Breast epithelium (tissue), 4 donors: ENCODE measurements at regions of chr1 and their contacts with region 1.

Region 1: DNA sequence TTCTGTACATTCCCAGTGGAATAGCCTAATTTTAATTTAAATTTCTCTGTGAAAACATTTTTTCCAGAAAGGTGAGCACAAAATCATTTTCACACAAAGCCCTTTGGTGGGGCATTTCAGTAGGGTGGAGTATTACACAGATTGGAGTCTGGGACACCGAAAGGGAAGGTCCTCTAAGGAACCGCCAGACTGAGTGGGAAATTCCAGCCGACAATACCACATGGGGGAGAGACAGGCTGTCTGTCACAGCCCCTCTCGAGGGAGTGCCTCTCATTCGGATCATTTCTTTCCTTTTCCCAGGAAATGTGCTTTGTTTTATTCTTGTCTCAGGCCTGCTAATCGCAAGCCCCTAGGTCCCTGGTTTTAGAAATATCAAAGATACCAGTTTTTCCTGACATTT is 150.6 kb upstream of the HOOK1 start:
- DNase-seq: no peak
- H3K4me3 ChIP-seq: no peak overlapping the region
- H3K27ac ChIP-seq: no peak overlapping the region
- H3K4me1 ChIP-seq: no peaks in the 10 kb centered on the region
- H3K27me3 ChIP-seq: no peaks in the 10 kb centered on the region
- CTCF ChIP-seq: no peak
- POLR2A ChIP-seq: no peak

Region 2: DNA sequence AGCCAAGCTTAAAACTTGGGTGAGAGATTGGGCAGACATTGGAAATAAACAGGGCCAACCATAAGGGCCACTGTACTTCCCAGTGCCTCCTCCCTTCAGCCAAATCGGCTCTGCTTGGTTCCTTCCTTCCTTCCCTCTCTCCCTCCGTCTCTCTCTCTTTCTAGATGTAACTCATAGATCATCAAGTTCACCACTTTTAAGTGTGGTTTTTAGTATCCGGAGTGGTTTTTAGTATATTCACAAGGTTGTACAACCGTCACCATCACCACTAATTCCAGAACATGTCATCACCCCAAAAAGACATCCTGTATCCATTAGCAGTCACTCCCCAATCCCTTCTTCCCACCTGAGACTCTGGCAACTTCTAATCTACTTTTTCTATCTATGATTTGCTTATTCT is 1015.3 kb before region 1 on chr1:
- intact Hi-C with region 1: no loop called
- DNase-seq: no peak
- H3K4me3 ChIP-seq: no peak overlapping the region
- H3K27ac ChIP-seq: no peak overlapping the region
- H3K4me1 ChIP-seq: no peaks in the 10 kb centered on the region
- H3K27me3 ChIP-seq: no peaks in the 10 kb centered on the region
- CTCF ChIP-seq: no peak
- POLR2A ChIP-seq: no peak

Region 3: GRCh38 chr1:59631561-59632255 is 32.5 kb before region 1 on chr1:
- intact Hi-C with region 1: loop called (anchors 2 kb)
- DNase-seq: no peak
- H3K4me3 ChIP-seq: no peak overlapping the region
- H3K27ac ChIP-seq: no peak overlapping the region
- H3K4me1 ChIP-seq: no peaks in the 10 kb centered on the region
- H3K27me3 ChIP-seq: no peaks in the 10 kb centered on the region
- CTCF ChIP-seq: no peak
- POLR2A ChIP-seq: no peak